ENCODE measurements at regions of chr19 and their contacts with region 1.

Region 1: GRCh38 chr19:17775245-17775916 is 19.6 kb upstream of the B3GNT3 start:
- DNase-seq: peak; percentile 32
- H3K4me3 ChIP-seq: no peak overlapping the region
- H3K27ac ChIP-seq: no peak overlapping the region
- H3K4me1 ChIP-seq: no peaks in the 10 kb centered on the region
- H3K27me3 ChIP-seq: no peaks in the 10 kb centered on the region
- CTCF ChIP-seq: peak; percentile 54 to 56
- POLR2A ChIP-seq: no peak

Region 2: DNA sequence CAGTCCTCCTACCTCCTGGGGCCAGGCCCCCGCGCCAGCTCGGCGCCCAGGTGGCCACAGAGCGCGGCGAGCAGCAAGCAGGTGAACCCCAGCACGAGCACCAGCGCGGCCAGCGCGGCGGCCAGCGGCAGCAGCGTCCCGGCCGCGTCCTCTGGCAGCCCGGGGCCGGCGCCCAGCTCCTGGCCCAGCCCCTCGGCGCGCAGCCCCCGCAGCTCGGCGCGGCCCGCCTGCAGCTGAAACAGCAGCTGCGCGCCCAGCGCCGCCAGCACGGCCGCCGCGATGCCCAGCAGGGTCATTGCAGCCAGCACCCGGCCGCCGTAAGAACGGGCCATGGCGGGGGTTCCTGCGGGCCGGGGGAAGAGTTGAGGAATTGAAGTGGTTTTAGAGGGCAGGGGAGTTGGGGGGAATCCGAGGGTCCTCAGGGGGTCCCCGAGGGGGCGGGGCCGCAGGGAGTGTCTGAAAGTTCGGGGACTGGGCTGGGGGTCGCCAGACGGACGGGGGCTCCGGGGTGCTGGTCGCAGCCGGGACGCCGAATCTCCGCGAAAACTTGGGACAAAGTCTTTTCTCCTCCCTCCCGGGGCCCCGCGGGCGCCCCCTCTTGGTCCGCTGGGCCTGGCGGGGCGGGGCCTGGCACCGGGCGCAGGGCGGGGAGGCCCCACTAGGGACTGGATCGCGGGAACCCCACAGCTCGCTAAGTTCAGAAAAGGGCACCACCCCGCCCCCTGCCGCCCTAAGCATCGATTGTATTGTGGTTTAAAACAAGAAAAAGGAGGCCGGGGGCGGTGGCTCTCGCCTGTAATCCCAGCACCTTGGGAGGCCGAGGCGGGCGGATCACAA is 327.0 kb before region 1 on chr19 and contains the start of gene TMEM221:
- CTCF ChIA-PET with region 1: no interaction called
- POLR2A ChIA-PET with region 1: no interaction called
- dilution Hi-C with region 1: no loop called
- intact Hi-C with region 1: loop called (anchors 5 kb)
- DNase-seq: no peak
- H3K4me3 ChIP-seq: peak within 1 kb of the TSS in 1 of 3 experiments; percentile 37
- H3K27ac ChIP-seq: no peak within 1 kb of the TSS
- H3K4me1 ChIP-seq: no peaks in the 10 kb centered on the region
- H3K27me3 ChIP-seq: peaks cover 8 to 14% of the 10 kb centered on the region in 2 experiments
- CTCF ChIP-seq: peak; percentile 55 to 72
- POLR2A ChIP-seq: no peak
- total RNA-seq, gene TMEM221: not detected in 2 replicates

Measured in endothelial cell of umbilical vein (primary cell).